Activated naive CD4-positive, alpha-beta T cell treated with anti-CD3 and anti-CD28 coated beads for 36 hours (primary cell): ENCODE measurements at regions of chr6 and their contacts with region 1.

Region 1: GRCh38 chr6:135624402-135625295 is 127.1 kb upstream of the AHI1 start:
- DNase-seq: peak; percentile 46
- H3K4me3 Mint-ChIP-seq: no peak overlapping the region
- H3K27ac Mint-ChIP-seq: peak overlapping the region; percentile 84
- H3K4me1 Mint-ChIP-seq: peaks cover 19% of the 10 kb centered on the region
- H3K27me3 Mint-ChIP-seq: no peaks in the 10 kb centered on the region

Region 2: DNA sequence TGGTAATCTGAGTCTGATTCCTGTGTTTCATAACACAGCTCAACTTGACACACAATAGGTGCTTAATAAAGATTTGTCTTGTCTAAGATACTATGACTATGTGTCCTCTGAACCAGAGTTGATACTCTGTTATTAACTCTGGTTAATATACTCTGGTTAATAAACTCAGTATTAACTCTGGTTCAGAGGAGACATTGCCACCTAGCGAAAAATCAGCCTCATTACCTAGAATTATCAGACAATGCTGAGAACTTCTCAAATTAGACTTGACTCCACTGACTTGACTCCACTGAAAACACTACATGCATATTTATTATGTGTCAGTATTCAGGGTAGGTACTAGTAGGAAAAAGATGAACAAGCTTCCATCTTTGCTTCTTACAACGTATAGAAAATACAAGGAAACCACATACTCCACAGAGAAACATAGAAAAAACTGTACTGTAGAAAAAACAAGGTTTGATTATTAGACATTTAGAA is 201.0 kb before region 1 on chr6:
- CTCF ChIA-PET with region 1: no interaction called
- intact Hi-C with region 1: no loop called
- DNase-seq: no peak
- H3K4me3 Mint-ChIP-seq: no peak overlapping the region
- H3K27ac Mint-ChIP-seq: no peak overlapping the region
- H3K4me1 Mint-ChIP-seq: no peaks in the 10 kb centered on the region
- H3K27me3 Mint-ChIP-seq: no peaks in the 10 kb centered on the region

Region 3: GRCh38 chr6:135458051-135458450 is 166.6 kb before region 1 on chr6:
- CTCF ChIA-PET with region 1: no interaction called
- intact Hi-C with region 1: no loop called
- DNase-seq: no peak
- H3K4me3 Mint-ChIP-seq: no peak overlapping the region
- H3K27ac Mint-ChIP-seq: no peak overlapping the region
- H3K4me1 Mint-ChIP-seq: no peaks in the 10 kb centered on the region
- H3K27me3 Mint-ChIP-seq: no peaks in the 10 kb centered on the region

Region 4: GRCh38 chr6:135568366-135568765 is 56.3 kb before region 1 on chr6:
- CTCF ChIA-PET with region 1: no interaction called
- intact Hi-C with region 1: loop called (anchors 2 kb)
- DNase-seq: peak; percentile 65
- H3K4me3 Mint-ChIP-seq: no peak overlapping the region
- H3K27ac Mint-ChIP-seq: no peak overlapping the region
- H3K4me1 Mint-ChIP-seq: peaks cover 8% of the 10 kb centered on the region
- H3K27me3 Mint-ChIP-seq: peaks cover 3% of the 10 kb centered on the region

Region 5: DNA sequence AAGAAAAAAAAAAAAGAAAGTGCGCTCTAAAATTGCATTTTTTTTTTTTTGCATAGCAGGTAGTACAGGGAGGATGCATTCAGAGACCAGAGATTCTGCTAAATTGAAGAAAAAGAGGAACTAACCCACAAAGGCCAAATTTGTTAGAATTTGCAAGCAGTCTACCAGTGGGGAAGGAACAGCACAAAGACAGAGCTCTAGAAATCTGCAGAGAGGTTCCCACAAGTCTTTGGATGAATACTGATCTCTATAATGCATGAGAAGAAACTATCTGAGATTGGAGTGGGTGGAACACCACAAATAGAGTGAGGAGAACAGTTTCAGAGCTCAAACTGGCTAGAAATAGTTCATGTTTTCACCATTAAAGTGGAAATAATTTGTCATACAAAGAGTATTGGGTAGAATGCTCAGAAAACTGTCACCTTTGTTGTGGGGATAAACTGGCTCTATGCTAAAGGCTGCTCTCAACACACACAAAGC is 47.5 kb before region 1 on chr6:
- CTCF ChIA-PET with region 1: no interaction called
- intact Hi-C with region 1: loop called (anchors 1 kb)
- DNase-seq: no peak
- H3K4me3 Mint-ChIP-seq: no peak overlapping the region
- H3K27ac Mint-ChIP-seq: peak overlapping the region; percentile 41
- H3K4me1 Mint-ChIP-seq: peaks cover 20% of the 10 kb centered on the region
- H3K27me3 Mint-ChIP-seq: no peaks in the 10 kb centered on the region

Region 6: GRCh38 chr6:135604035-135604860 is 20.4 kb before region 1 on chr6:
- CTCF ChIA-PET with region 1: no interaction called
- intact Hi-C with region 1: loop called (anchors 1 kb)
- DNase-seq: peak; percentile 10
- H3K4me3 Mint-ChIP-seq: no peak overlapping the region
- H3K27ac Mint-ChIP-seq: no peak overlapping the region
- H3K4me1 Mint-ChIP-seq: peaks cover 22% of the 10 kb centered on the region
- H3K27me3 Mint-ChIP-seq: no peaks in the 10 kb centered on the region

Region 7: DNA sequence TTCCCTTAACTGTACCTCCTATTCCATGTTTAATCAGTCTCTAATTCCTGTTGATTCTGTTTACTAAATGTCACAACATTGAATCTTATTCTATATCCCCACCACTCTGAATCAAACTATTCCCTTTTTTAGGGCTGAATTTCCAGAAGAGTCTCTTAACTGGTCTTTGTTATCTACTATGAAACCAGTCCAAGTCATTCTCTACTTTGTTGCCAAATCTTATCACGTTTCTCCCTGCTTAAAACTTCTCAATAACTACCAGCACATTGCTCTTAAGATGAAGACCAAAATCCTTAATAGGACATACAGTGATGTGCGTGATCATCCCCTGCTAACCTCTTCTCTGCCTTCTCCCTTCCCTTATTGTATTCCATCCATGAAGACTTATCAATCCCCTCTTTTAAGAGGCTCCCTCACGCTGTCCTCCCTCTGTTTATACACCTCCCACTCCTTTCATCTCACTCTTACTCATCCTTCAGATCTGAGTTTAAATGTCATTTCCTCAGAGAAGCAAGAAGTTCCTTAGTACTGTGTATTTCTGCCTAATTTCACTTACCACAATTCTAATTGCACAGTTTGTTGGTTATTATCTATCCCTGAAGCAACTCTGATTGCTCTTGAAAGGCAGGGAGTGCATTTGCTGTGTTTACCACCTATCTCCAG is 15.9 kb after region 1 on chr6:
- CTCF ChIA-PET with region 1: no interaction called
- intact Hi-C with region 1: loop called (anchors 1 kb)
- DNase-seq: no peak
- H3K4me3 Mint-ChIP-seq: no peak overlapping the region
- H3K27ac Mint-ChIP-seq: no peak overlapping the region
- H3K4me1 Mint-ChIP-seq: peaks cover 20% of the 10 kb centered on the region
- H3K27me3 Mint-ChIP-seq: no peaks in the 10 kb centered on the region

Region 8: DNA sequence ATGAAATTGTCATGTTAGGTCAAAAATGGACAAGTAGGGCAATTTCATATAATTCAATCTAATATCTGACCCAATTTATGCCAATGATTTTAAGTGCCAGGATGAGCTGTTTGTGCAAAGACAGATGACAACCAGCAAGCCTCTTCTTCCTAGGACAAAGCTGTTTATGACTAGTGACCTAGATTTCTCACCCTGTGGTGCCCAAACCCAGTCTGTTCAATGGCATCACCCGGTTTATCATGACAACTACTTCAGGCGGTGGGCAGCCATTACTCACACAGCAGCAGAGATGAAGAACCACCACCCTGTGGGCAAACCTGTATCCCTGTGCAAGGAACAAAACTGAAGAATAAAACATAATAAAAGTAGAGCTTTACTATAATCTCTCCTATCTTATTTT is 866.6 kb after region 1 on chr6:
- CTCF ChIA-PET with region 1: no interaction called
- intact Hi-C with region 1: no loop called
- DNase-seq: no peak
- H3K4me3 Mint-ChIP-seq: no peak overlapping the region
- H3K27ac Mint-ChIP-seq: no peak overlapping the region
- H3K4me1 Mint-ChIP-seq: no peaks in the 10 kb centered on the region
- H3K27me3 Mint-ChIP-seq: no peaks in the 10 kb centered on the region